ENCODE measurements at regions of chr1 and their contacts with region 1.

Region 1: GRCh38 chr1:155978325-155978972 is at the start of gene ARHGEF2:
- DNase-seq: peak; percentile 87
- ATAC-seq: peak; percentile 70
- H3K4me3 Mint-ChIP-seq: peak within 1 kb of the TSS; percentile 96
- H3K27ac Mint-ChIP-seq: peak within 1 kb of the TSS; percentile 93
- H3K4me1 Mint-ChIP-seq: peaks cover 74% of the 10 kb centered on the region
- H3K27me3 Mint-ChIP-seq: no peaks in the 10 kb centered on the region
- total RNA-seq, gene ARHGEF2: 142 to 147 TPM

Region 2: GRCh38 chr1:155940531-155940992 is 37.9 kb before region 1 on chr1:
- CTCF ChIA-PET with region 1: interaction called, 113 read pairs
- POLR2A ChIA-PET with region 1: interaction called, 45 read pairs
- DNase-seq: no peak
- ATAC-seq: peak; percentile 16
- H3K4me3 Mint-ChIP-seq: peak overlapping the region; percentile 47
- H3K27ac Mint-ChIP-seq: peak overlapping the region; percentile 94
- H3K4me1 Mint-ChIP-seq: peaks cover 60% of the 10 kb centered on the region
- H3K27me3 Mint-ChIP-seq: no peaks in the 10 kb centered on the region

Region 3: GRCh38 chr1:155946633-155947219 is 31.7 kb before region 1 on chr1:
- CTCF ChIA-PET with region 1: interaction called, 13 read pairs
- POLR2A ChIA-PET with region 1: interaction called, 45 read pairs
- DNase-seq: no peak
- ATAC-seq: no peak
- H3K4me3 Mint-ChIP-seq: peak overlapping the region; percentile 46
- H3K27ac Mint-ChIP-seq: peak overlapping the region; percentile 87
- H3K4me1 Mint-ChIP-seq: peaks cover 53% of the 10 kb centered on the region
- H3K27me3 Mint-ChIP-seq: no peaks in the 10 kb centered on the region